Caco-2 (cell line): ENCODE measurements at regions of chr2 and their contacts with region 1.

Region 1: DNA sequence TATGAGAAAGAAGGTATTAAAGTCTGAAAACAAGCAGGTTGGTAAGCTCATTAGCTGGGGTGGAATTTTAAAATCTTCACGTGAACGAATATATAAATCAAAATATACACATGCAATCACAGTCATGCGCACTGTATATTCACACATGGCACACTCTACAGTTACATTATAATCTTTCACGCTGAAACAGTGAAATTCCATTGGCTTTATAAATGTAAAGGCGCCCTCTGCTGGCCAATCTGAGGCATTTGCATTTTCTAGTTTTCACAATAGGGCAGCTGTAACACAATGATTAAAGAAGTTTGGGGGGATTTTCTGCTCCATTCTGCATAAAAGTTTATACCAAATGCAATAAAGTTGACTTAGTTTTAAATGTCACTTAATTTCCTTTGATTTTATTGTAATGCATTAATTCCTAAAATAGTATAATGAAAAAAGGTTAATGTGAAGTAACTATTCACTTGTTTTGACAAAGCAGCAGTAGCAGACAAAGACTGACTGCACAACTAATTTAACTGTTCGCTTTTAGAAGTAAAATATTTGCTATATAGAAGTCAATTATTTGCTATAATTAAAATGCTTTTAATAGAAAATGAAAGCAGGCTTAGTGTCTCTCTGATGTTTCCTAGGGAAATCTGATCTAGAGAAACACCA is 17.2 kb downstream of the IFIH1 start:
- DNase-seq: peak in 1 of 2 experiments; percentile 42
- H3K4me3 ChIP-seq: no peak overlapping the region
- H3K4me3 Mint-ChIP-seq: no peak overlapping the region
- H3K27ac Mint-ChIP-seq: no peak overlapping the region
- H3K4me1 ChIP-seq: no peaks in the 10 kb centered on the region
- H3K4me1 Mint-ChIP-seq: no peaks in the 10 kb centered on the region
- H3K27me3 ChIP-seq: no peaks in the 10 kb centered on the region
- H3K27me3 Mint-ChIP-seq: peaks cover 3% of the 10 kb centered on the region
- CTCF ChIP-seq: peak; percentile 78 to 83

Region 2: GRCh38 chr2:161586517-161587167 is 714.6 kb before region 1 on chr2:
- CTCF ChIA-PET with region 1: no interaction called
- POLR2A ChIA-PET with region 1: no interaction called
- intact Hi-C with region 1: loop called (anchors 1 kb)
- DNase-seq: no peak
- H3K4me3 ChIP-seq: no peak overlapping the region
- H3K4me3 Mint-ChIP-seq: no peak overlapping the region
- H3K27ac Mint-ChIP-seq: no peak overlapping the region
- H3K4me1 ChIP-seq: no peaks in the 10 kb centered on the region
- H3K4me1 Mint-ChIP-seq: no peaks in the 10 kb centered on the region
- H3K27me3 ChIP-seq: no peaks in the 10 kb centered on the region
- H3K27me3 Mint-ChIP-seq: peaks cover 7% of the 10 kb centered on the region
- CTCF ChIP-seq: peak; percentile 54 to 66

Region 3: DNA sequence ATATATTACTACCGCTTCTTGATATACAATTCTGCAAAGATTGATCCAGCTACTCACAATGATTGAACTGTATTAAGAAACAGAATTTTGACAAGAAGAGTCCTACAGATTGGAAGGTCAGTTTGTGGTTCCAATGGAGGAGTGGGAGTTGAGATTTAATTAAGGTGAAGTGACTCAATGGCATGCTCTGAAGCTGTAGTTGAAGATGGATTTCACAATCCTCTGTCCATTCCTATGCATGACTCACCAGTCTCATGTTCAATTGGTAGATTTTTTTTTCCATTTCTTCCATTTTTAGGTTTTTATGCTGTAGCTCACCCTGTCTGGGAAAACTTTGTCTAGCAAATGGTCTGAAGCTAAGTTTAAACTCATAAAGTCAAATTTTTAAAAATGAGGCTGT is 310.5 kb before region 1 on chr2:
- CTCF ChIA-PET with region 1: no interaction called
- POLR2A ChIA-PET with region 1: no interaction called
- intact Hi-C with region 1: no loop called
- DNase-seq: peak in 1 of 2 experiments; percentile 14
- H3K4me3 ChIP-seq: no peak overlapping the region
- H3K4me3 Mint-ChIP-seq: no peak overlapping the region
- H3K27ac Mint-ChIP-seq: no peak overlapping the region
- H3K4me1 ChIP-seq: peaks cover 4% of the 10 kb centered on the region
- H3K4me1 Mint-ChIP-seq: peaks cover 4% of the 10 kb centered on the region
- H3K27me3 ChIP-seq: no peaks in the 10 kb centered on the region
- H3K27me3 Mint-ChIP-seq: no peaks in the 10 kb centered on the region
- CTCF ChIP-seq: no peak

Region 4: DNA sequence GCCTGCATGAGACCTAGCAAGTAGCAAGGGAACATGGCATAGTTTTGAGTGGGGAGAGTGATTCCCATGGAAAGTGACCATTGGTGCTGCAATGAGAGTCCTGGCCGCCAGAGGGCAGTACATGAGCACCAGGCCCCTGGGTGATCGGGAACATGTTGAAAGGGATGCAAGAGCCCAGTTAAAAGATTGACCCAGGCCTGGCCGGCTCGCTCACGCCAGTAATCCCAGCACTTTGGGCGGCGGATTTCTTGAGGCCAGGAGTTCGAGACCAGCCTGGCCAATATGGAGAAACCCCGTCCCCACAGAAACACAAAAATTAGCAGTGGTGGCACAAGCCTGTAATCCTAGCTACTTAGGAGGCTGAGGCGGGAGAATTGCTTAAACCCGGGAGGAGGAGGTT is 80.2 kb before region 1 on chr2:
- CTCF ChIA-PET with region 1: interaction called, 43 read pairs
- POLR2A ChIA-PET with region 1: no interaction called
- intact Hi-C with region 1: loop called (anchors 1 kb)
- DNase-seq: peak; percentile 61 to 81
- H3K4me3 ChIP-seq: no peak overlapping the region
- H3K4me3 Mint-ChIP-seq: no peak overlapping the region
- H3K27ac Mint-ChIP-seq: no peak overlapping the region
- H3K4me1 ChIP-seq: no peaks in the 10 kb centered on the region
- H3K4me1 Mint-ChIP-seq: no peaks in the 10 kb centered on the region
- H3K27me3 ChIP-seq: no peaks in the 10 kb centered on the region
- H3K27me3 Mint-ChIP-seq: peaks cover 15% of the 10 kb centered on the region
- CTCF ChIP-seq: peak; percentile 91 to 95

Region 5: DNA sequence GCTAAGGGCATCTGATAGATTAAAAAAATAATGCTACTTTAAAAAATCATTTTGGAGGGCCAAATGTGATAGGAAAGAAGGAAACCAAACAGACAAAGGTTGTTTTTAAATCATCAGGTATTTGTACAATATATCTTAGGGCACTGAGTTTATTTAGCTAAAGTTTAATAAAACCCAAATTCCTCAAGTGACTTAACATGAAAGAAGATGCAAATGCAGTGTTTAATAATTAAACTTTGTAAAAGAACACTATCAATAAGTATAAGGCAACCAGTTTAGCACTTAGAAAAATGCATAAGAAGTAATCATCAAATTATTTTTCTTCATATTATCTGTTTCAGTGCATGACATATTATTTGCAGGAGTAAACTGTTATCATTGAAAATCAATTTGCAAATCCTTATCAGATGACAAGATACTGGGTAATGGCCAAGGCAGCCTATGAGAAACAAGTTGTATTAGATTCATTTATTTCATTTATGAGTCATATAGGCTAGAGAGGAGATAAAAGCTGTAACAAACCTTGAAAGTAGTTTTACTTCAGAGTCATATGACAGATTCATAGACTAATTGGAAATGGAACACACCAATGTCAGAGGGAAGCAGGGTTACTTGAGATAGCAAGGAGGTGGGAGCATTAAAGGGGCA is 208.1 kb after region 1 on chr2:
- CTCF ChIA-PET with region 1: no interaction called
- POLR2A ChIA-PET with region 1: no interaction called
- intact Hi-C with region 1: no loop called
- DNase-seq: no peak
- H3K4me3 ChIP-seq: no peak overlapping the region
- H3K4me3 Mint-ChIP-seq: no peak overlapping the region
- H3K27ac Mint-ChIP-seq: no peak overlapping the region
- H3K4me1 ChIP-seq: no peaks in the 10 kb centered on the region
- H3K4me1 Mint-ChIP-seq: no peaks in the 10 kb centered on the region
- H3K27me3 ChIP-seq: no peaks in the 10 kb centered on the region
- H3K27me3 Mint-ChIP-seq: peaks cover 7% of the 10 kb centered on the region
- CTCF ChIP-seq: no peak

Region 6: DNA sequence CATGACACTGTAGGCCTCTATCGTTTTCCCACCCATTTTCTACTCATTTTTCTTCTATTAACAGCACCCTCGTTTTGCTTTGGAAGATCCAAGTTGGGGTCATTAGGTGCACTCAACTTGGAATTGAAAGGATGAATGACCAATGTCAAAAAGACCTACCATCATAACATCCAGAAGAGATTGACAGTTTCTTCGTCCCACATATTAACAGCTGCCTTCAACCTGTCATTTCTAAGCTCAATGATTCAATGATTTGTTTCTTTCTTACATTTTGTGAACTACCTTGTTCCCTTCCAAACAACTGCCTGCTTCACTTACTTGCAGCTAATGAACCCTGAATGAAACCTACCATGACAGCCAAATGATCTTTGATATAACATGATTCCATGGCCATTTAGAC is 761.2 kb after region 1 on chr2:
- CTCF ChIA-PET with region 1: no interaction called
- POLR2A ChIA-PET with region 1: no interaction called
- intact Hi-C with region 1: no loop called
- DNase-seq: no peak
- H3K4me3 ChIP-seq: no peak overlapping the region
- H3K4me3 Mint-ChIP-seq: no peak overlapping the region
- H3K27ac Mint-ChIP-seq: no peak overlapping the region
- H3K4me1 ChIP-seq: no peaks in the 10 kb centered on the region
- H3K4me1 Mint-ChIP-seq: no peaks in the 10 kb centered on the region
- H3K27me3 ChIP-seq: no peaks in the 10 kb centered on the region
- H3K27me3 Mint-ChIP-seq: no peaks in the 10 kb centered on the region
- CTCF ChIP-seq: no peak